ENCODE measurements at regions of chr2 and their contacts with region 1.

Region 1: DNA sequence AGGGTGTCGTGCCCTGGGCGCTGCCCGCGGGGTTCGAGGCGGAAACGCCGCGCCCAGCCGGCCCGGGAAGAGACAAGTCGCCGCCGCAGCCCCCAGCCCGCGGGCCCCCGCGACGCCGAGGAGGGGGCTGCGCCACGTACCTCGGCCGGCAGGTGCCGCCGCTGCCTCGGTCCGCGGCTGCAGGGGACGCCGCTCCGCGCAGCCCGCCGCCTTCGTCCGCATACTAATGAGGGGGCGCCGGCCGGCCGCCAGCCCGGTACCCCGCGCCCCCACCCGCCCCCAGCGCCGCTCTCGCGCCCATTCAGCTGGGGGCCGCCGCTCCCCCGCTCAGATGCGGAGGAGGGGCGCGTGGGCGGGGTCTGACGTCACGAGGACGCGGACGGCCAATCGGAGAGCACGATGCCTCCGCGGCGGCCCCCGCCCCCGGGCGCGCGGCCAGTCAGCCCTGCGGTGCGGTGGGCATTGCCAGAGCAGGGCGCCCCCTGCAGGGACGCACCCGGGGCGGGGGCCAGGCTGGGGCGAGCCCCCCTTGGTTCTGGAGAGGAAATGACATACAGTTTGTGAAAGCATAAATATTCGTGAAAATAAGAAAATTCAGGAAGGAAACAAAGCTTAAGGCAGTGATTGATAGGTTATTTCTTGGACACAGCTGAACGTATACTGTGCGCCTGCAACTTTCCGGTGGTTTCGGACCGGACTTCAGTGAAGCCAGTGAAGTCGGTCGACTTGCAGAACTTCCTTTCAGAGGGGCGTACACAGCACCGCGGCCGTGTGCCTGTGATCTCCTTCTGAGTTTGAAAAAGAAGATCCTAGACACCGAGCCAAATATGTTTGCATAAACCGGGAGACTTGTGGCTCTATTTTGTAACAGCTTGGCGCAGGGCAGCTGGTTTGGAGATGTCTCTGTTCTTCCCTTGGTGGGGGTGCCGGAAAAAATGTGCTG is at the start of gene ST3GAL5:
- DNase-seq: peak; percentile 51
- ATAC-seq: peak; percentile 87
- H3K4me3 ChIP-seq: peak within 1 kb of the TSS; percentile 65
- H3K27ac ChIP-seq: peak within 1 kb of the TSS; percentile 4; the same call in 1 of the 2 replicates
- H3K4me1 ChIP-seq: peaks cover 13% of the 10 kb centered on the region; the same call in 1 of the 2 replicates
- H3K27me3 ChIP-seq: no peaks in the 10 kb centered on the region; a peak in 1 of 4 replicates
- CTCF ChIP-seq: peak; percentile 79 to 84 (median 81)
- EP300 ChIP-seq: peak; percentile 28 to 57; a peak in 1 of 4 replicates
- POLR2A ChIP-seq: peak; percentile 39; the same call in 1 of the 2 replicates
- RAD21 ChIP-seq: peak; percentile 71
- polyA plus RNA-seq, gene ST3GAL5: 5.6 to 7.5 TPM

Region 2: GRCh38 chr2:85230679-85231467 is 658.1 kb before region 1 on chr2:
- CTCF ChIA-PET with region 1: no interaction called
- POLR2A ChIA-PET with region 1: interaction called, 10 read pairs
- RAD21 ChIA-PET with region 1: no interaction called
- SMC1A ChIA-PET with region 1: no interaction called
- in situ Hi-C with region 1: no loop called
- intact Hi-C with region 1: no loop called
- DNase-seq: no peak
- ATAC-seq: peak; percentile 57
- H3K4me3 ChIP-seq: no peak overlapping the region
- H3K27ac ChIP-seq: no peak overlapping the region
- H3K4me1 ChIP-seq: no peaks in the 10 kb centered on the region
- H3K27me3 ChIP-seq: no peaks in the 10 kb centered on the region; a peak in 1 of 4 replicates
- CTCF ChIP-seq: peak in 1 of 3 experiments; percentile 14; a peak in 1 of 6 replicates
- EP300 ChIP-seq: no peak
- POLR2A ChIP-seq: no peak
- RAD21 ChIP-seq: no peak

Region 3: DNA sequence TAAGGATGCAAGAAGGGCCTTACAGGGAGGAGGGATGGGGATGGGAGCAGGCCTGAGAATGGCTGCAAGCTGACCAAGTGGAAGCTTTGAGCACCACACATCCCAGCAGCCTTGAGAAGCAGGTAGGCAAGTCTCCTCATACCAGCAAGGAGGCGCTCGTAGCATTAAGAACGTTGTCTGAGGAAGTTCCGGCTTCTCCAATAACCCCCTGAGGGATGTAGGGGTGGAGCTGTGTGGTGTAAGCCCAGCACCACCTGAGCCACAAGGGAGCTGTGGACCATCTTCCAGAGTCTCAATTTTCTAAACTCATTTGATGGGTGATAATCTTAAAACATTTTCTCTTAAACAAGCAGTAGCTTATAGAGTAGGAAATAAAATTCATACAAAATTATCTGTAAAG is 50.8 kb before region 1 on chr2:
- CTCF ChIA-PET with region 1: interaction called, 251 read pairs
- POLR2A ChIA-PET with region 1: interaction called, 4 read pairs
- RAD21 ChIA-PET with region 1: interaction called, 10 read pairs
- SMC1A ChIA-PET with region 1: interaction called, 248 read pairs
- in situ Hi-C with region 1: no loop called
- intact Hi-C with region 1: no loop called
- DNase-seq: no peak
- ATAC-seq: no peak
- H3K4me3 ChIP-seq: no peak overlapping the region
- H3K27ac ChIP-seq: no peak overlapping the region
- H3K4me1 ChIP-seq: peaks cover 9% of the 10 kb centered on the region
- H3K27me3 ChIP-seq: no peaks in the 10 kb centered on the region
- CTCF ChIP-seq: no peak
- EP300 ChIP-seq: no peak
- POLR2A ChIP-seq: no peak
- RAD21 ChIP-seq: no peak

Region 4: GRCh38 chr2:85865539-85866164 is 23.3 kb before region 1 on chr2:
- CTCF ChIA-PET with region 1: interaction called, 62 read pairs
- POLR2A ChIA-PET with region 1: interaction called, 34 read pairs
- RAD21 ChIA-PET with region 1: interaction called, 59 read pairs
- SMC1A ChIA-PET with region 1: interaction called, 112 read pairs
- in situ Hi-C with region 1: no loop called
- intact Hi-C with region 1: no loop called
- DNase-seq: peak; percentile 62
- ATAC-seq: peak; percentile 90
- H3K4me3 ChIP-seq: no peak overlapping the region; the same call in 1 of the 2 replicates
- H3K27ac ChIP-seq: no peak overlapping the region
- H3K4me1 ChIP-seq: peaks cover 24% of the 10 kb centered on the region
- H3K27me3 ChIP-seq: no peaks in the 10 kb centered on the region
- CTCF ChIP-seq: no peak
- EP300 ChIP-seq: peak in 1 of 2 experiments; percentile 58; a peak in 1 of 4 replicates
- POLR2A ChIP-seq: no peak
- RAD21 ChIP-seq: peak; percentile 7; the same call in 1 of the 2 replicates

Region 5: DNA sequence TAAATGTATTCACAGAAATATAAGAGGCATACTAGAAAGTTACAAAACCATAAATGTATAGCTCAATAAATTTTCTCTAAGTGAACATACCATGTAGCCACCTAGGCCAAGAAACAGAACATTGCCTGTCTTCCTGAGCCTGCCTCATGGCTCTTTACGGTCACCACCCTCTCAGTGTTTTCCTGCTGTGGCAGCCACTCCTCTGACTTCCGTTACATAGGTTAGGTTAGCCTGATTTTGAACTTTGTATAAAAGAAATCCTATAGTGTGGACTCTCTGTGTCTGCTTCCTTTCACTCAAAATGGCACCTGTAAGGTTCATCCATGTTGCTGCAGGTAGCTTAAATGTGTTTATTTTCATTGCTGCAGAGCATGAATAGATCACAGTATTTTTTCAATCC is 11.4 kb after region 1 on chr2:
- CTCF ChIA-PET with region 1: interaction called, 6 read pairs
- POLR2A ChIA-PET with region 1: interaction called, 7 read pairs
- RAD21 ChIA-PET with region 1: interaction called, 5 read pairs
- SMC1A ChIA-PET with region 1: interaction called, 16 read pairs
- in situ Hi-C with region 1: no loop called
- intact Hi-C with region 1: no loop called
- DNase-seq: no peak
- ATAC-seq: no peak
- H3K4me3 ChIP-seq: no peak overlapping the region
- H3K27ac ChIP-seq: no peak overlapping the region
- H3K4me1 ChIP-seq: no peaks in the 10 kb centered on the region
- H3K27me3 ChIP-seq: no peaks in the 10 kb centered on the region
- CTCF ChIP-seq: no peak
- EP300 ChIP-seq: no peak
- POLR2A ChIP-seq: no peak
- RAD21 ChIP-seq: no peak

Region 6: DNA sequence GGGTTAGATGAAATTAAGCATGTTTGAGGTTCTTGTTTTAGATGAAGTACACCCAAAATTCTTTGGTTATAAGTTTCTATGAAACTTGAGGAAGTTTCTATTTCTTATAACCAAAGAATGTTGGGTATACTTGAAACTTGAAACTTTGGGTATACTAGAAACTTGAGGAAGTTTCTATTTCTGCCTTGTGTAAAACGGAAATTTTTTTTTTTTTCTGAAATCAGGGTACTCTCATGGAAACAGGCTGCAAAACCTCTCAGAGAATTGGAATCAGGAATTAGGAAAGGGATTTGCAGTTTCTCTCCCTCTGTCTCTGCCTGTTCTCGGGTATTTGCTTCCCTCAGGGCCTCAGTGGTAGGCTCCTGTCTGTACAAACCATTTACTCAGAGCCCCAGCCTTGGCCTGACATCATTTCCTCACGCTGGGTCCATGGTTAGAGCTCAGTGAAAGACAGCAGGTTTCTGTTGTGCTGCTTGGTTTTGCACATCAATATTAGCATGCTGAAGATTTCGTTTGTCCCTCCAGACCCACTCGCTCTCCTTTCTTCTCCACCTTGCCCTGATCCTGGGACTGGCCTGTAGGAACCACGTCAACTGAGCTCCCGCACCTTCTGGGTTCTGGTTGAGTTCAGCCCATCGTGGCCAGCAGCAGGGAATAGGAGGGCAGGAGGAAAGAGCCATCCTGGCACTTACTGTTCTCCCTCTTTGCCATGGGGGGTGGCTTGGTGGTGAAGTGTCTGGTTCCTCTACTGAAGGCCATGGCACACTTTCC is 110.3 kb after region 1 on chr2:
- CTCF ChIA-PET with region 1: interaction called, 58 read pairs
- POLR2A ChIA-PET with region 1: interaction called, 70 read pairs
- RAD21 ChIA-PET with region 1: interaction called, 150 read pairs
- SMC1A ChIA-PET with region 1: interaction called, 95 read pairs
- in situ Hi-C with region 1: no loop called
- intact Hi-C with region 1: loop called (anchors 2 kb)
- DNase-seq: peak; percentile 77
- ATAC-seq: peak; percentile 87
- H3K4me3 ChIP-seq: peak overlapping the region; percentile 10; the same call in 1 of the 2 replicates
- H3K27ac ChIP-seq: peak overlapping the region; percentile 93
- H3K4me1 ChIP-seq: peaks cover 63% of the 10 kb centered on the region
- H3K27me3 ChIP-seq: no peaks in the 10 kb centered on the region
- CTCF ChIP-seq: no peak
- EP300 ChIP-seq: no peak
- POLR2A ChIP-seq: peak; percentile 64
- RAD21 ChIP-seq: no peak

Region 7: GRCh38 chr2:86035883-86036668 is 147.1 kb after region 1 on chr2:
- CTCF ChIA-PET with region 1: interaction called, 100 read pairs
- POLR2A ChIA-PET with region 1: interaction called, 43 read pairs
- RAD21 ChIA-PET with region 1: interaction called, 132 read pairs
- SMC1A ChIA-PET with region 1: interaction called, 108 read pairs
- in situ Hi-C with region 1: no loop called
- intact Hi-C with region 1: loop called (anchors 1 kb)
- DNase-seq: peak; percentile 71
- ATAC-seq: peak; percentile 92
- H3K4me3 ChIP-seq: peak overlapping the region; percentile 49; the same call in 1 of the 2 replicates
- H3K27ac ChIP-seq: peak overlapping the region; percentile 76
- H3K4me1 ChIP-seq: peaks cover 37% of the 10 kb centered on the region
- H3K27me3 ChIP-seq: no peaks in the 10 kb centered on the region
- CTCF ChIP-seq: peak; percentile 39 to 56 (median 49); a peak in 5 of 6 replicates
- EP300 ChIP-seq: peak; percentile 51 to 70
- POLR2A ChIP-seq: no peak; the same call in 1 of the 2 replicates
- RAD21 ChIP-seq: peak; percentile 66; the same call in 1 of the 2 replicates